AG04449 (cell line): ENCODE measurements at regions of chr1 and their contacts with region 1.

Region 1: DNA sequence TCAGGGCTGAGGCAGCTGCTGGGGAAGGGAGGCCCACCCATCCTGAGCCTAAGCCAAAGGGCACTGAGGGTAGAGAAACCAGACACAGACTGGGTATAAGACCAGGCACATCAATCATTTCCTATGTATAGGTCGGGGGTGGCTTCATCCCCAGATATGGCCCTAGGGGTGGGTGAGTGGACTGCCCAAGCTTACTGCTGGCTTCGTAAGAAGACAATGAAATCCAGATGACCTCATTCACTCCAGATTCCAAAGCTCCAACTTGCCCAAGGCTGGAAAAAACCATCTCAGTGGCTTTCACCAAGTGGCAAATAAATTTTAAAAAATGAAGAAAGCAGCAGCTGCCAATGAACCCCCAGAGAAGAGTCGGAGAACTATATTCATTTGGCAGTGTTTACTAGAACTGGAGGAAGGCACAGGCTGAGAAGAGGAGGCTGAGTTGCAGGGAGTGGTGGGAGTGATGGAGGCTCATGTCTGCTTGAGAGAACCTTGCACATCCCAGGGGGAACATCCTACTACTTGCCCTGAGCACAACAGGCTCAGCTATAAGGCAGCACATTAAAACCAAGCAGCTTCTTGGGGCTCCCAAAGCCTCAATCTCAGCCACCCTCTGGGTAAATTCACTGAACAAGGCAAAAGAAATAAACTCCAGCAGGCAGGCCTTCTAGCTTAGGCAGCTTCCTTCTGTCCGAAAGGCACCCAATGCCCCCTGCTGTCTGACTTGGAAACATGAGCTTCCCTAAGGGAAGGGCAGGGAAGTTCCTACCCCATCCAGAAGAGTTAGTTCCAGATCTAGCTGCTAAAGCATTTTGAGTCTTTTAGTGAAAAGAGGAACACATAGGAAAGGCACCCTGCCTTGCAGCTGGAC is 14.1 kb downstream of the PEA15 start:
- DNase-seq: peak; percentile 36
- H3K4me3 ChIP-seq: no peak overlapping the region
- CTCF ChIP-seq: peak; percentile 79

Region 2: DNA sequence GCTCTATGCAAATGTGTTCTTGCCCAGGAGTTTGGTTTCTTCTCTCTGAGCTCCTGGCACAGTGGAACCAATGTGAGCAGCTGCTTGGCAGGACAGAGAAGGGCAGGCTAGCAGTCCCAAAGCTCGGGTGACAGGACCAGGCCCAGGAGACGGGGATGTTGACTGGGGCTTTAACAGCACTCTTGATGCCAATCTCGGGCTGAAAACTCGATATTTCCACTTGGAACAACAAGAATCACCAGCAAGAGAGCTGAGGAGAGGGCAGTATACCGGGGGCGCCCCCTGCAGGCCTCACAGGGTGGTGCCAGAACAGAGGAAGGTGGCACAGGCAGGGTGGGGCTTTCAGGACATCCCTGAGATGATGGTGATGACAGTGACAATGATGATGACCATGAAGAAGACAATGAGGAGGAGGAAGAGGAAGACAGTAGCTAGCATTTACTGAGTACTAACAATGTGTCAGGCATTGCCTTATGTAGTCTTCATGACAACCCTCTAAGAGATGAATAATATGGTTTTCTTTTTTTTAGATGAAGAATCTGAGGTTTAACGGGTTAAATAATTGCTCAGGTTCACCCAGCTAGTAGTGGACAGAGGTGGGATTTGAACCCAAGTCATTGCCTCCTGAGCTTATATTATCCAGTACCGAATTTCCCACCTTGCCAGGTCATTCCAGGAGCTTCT is 140.6 kb before region 1 on chr1:
- CTCF ChIA-PET with region 1: interaction called, 23 read pairs
- POLR2A ChIA-PET with region 1: no interaction called
- DNase-seq: no peak
- H3K4me3 ChIP-seq: no peak overlapping the region
- CTCF ChIP-seq: peak; percentile 77

Region 3: DNA sequence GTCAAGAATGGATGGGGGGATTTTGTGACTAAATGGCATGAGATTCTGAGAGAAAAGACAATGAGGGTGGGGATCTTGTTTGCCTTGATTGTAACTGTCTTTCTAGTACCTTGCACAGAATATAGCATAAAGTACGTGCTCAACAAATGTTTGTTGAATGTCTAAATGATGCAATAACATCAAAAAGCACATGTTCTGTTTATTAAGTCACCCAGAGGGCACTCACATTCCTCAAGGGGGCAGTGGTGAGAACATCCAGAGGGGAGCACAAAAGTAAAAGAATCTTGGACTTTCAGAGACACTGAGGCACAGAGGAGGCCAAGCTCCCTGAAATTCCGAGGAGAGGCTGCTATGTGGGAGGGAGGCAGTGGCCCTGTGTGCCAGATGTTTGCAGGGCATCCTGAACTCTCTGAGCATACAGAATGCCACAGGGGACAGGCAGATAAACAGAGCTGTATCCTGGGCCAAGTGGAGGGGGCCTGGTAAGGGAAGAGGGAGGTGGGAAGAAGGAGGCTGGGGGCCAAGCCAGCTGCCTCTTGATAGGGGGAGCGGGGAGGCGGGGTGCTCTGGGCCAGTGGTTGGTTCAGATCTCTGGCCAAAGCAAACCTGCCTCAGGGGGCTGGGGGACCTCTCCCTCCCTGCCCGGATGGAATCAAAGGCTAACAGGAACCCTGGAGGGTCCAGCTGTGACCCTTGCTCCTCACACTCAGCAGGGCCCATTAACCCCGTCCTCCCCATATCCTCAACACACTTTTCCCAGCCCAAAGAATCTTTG is 110.2 kb before region 1 on chr1:
- CTCF ChIA-PET with region 1: interaction called, 206 read pairs
- POLR2A ChIA-PET with region 1: no interaction called
- DNase-seq: no peak
- H3K4me3 ChIP-seq: no peak overlapping the region
- CTCF ChIP-seq: peak; percentile 35

Region 4: GRCh38 chr1:160161965-160162705 is 57.2 kb before region 1 on chr1:
- CTCF ChIA-PET with region 1: interaction called, 31 read pairs
- POLR2A ChIA-PET with region 1: interaction called, 3 read pairs
- DNase-seq: no peak
- H3K4me3 ChIP-seq: no peak overlapping the region
- CTCF ChIP-seq: peak; percentile 64

Region 5: GRCh38 chr1:160205242-160206035 is 13.9 kb before region 1 on chr1 and contains the start of gene PEA15:
- CTCF ChIA-PET with region 1: interaction called, 104 read pairs
- POLR2A ChIA-PET with region 1: interaction called, 34 read pairs
- DNase-seq: no peak
- H3K4me3 ChIP-seq: peak within 1 kb of the TSS; percentile 96
- CTCF ChIP-seq: no peak

Region 6: DNA sequence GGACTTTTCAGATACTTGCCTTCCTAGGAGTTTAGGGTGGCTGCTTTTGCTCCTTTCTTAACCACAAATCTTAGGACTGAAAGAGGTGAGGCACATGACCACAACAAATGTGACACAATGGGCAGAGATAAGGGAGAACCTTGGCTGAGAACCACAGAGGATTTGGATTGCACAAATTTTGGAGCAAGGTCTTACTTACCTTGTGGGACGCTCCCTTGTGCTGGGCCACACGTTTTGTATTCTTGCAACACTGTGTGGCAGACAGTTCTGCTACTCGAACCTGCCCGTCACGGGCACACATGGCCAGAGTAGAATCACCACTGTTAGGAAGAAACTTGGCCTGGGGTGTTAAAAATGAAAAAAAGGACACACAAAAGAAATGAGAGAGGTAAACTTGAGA is 19.1 kb after region 1 on chr1:
- CTCF ChIA-PET with region 1: interaction called, 26 read pairs
- POLR2A ChIA-PET with region 1: interaction called, 3 read pairs
- DNase-seq: no peak
- H3K4me3 ChIP-seq: no peak overlapping the region
- CTCF ChIP-seq: no peak

Region 7: GRCh38 chr1:160328184-160328583 is 108.9 kb after region 1 on chr1:
- CTCF ChIA-PET with region 1: no interaction called
- POLR2A ChIA-PET with region 1: no interaction called
- DNase-seq: no peak
- H3K4me3 ChIP-seq: no peak overlapping the region
- CTCF ChIP-seq: no peak

Region 8: DNA sequence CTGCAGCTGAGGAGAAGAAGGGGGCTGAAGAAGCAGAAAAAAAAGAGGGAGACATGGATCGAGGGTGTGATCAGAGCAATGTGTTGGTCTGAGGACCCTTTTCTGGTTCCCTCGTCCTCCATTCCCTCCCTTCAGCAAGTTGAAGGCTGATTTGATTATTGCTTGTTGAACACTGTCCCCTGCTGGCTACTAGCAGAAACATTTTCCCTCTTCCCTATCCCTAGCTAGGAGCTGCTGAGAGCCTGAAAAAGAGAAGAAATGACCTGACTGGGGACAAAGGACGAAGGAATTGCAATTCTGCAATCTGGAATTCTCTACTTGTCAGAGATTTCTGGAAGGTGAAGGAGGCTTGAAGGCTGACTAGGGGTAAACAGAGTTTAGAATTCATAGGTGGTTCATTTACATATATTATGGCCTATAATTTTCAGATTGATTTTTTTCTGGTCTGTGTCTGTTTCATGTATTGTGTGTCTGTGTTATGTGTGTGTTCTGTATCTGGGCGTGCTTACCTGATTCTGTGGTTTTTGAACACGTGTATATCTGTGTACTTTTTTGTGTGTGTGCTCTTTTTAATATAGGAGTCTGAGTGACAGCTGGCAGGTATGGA is 157.3 kb after region 1 on chr1:
- CTCF ChIA-PET with region 1: interaction called, 10 read pairs
- POLR2A ChIA-PET with region 1: no interaction called
- DNase-seq: no peak
- H3K4me3 ChIP-seq: no peak overlapping the region
- CTCF ChIP-seq: peak; percentile 84